ENCODE measurements at regions of chr1 and their contacts with region 1.

Region 1: GRCh38 chr1:66436378-66437145 is 97.4 kb upstream of the SGIP1 start:
- DNase-seq: peak; percentile 42 to 56 (median 48)
- H3K4me3 ChIP-seq: no peak overlapping the region
- H3K4me3 Mint-ChIP-seq: peak overlapping the region in 4 of 8 donors; percentile 4 to 61 (median 31)
- H3K27ac ChIP-seq: no peak overlapping the region
- H3K27ac Mint-ChIP-seq: peak overlapping the region in 6 of 7 donors; percentile 0 to 92 (median 52)
- H3K4me1 ChIP-seq: peaks cover 21% of the 10 kb centered on the region
- H3K4me1 Mint-ChIP-seq: peaks cover 8 to 27% (median 19%) of the 10 kb centered on the region in 4 donors
- H3K27me3 ChIP-seq: no peaks in the 10 kb centered on the region
- H3K27me3 Mint-ChIP-seq: no peaks in the 10 kb centered on the region

Region 2: DNA sequence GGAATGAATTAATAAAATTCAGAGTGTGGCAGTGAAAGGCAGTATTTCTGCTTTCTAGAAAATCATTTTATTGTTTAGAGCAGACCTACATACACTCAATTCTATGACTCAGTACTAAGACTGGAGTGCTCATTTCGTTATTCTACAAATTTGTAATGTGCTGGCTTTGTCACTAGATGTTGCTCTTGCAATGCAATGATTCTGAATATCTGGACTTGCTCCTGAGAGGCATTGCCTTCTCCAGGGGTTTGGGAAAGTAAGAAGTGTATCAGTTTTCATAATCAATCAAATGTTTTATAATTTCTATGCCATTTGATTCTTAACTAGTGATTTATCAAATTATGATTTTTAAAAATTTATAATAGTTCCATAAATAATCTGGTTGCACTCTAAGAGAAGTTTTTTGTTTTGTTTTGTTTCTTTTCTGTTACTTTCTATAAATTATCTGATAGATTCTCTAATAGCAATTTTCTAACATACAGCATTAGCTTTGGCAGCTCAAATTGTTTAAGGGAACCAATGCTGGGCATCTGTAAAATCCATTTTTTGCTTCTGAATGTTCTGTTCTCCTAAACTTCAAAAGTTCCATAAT is 183.1 kb before region 1 on chr1:
- CTCF ChIA-PET with region 1: interaction called, 108 read pairs
- POLR2A ChIA-PET with region 1: interaction called, 4 read pairs
- intact Hi-C with region 1: loop called (anchors 2 kb)
- DNase-seq: peak in 4 of 5 donors; percentile 45 to 55 (median 50)
- H3K4me3 ChIP-seq: no peak overlapping the region
- H3K4me3 Mint-ChIP-seq: no peak overlapping the region
- H3K27ac ChIP-seq: no peak overlapping the region
- H3K27ac Mint-ChIP-seq: peak overlapping the region in 1 of 7 donors; percentile 57
- H3K4me1 ChIP-seq: peaks cover 26% of the 10 kb centered on the region
- H3K4me1 Mint-ChIP-seq: peaks cover 5 to 24% (median 16%) of the 10 kb centered on the region in 4 donors
- H3K27me3 ChIP-seq: no peaks in the 10 kb centered on the region
- H3K27me3 Mint-ChIP-seq: peaks cover 0 to 2% of the 10 kb centered on the region in 2 donors

Region 3: DNA sequence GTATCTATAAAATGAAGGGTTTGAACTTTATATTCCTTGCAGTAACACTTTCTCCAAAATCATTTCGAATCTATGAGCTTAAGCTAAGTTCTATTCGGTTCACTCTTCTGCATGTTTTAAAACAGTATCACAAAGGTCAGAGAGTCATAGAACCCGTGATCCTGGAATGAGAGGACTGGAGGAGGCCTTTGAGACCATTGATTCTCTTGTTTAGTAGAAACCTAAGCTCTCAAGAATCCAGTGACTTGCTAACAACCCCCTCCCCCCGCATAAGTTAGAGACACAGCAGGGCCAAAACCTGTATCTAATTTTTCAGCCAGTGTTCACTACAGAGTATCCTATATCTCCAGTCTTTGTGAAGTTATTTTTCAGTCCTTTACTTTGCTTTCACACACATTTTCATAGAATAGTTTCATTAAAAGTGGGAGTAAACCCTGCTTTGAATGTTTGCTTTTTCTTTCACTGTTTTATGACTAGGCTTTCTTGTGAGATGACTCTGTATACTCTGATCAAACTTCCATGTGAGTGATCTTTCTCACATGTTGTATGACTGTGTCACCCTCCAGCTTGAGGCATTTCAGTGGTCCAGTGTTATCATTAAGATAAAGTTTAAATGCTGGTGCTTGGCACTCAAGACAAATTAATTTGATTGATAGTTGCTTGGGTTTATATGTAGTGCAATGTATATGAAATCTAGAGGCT is 178.0 kb before region 1 on chr1:
- CTCF ChIA-PET with region 1: interaction called, 108 read pairs
- POLR2A ChIA-PET with region 1: interaction called, 4 read pairs
- intact Hi-C with region 1: loop called (anchors 2 kb)
- DNase-seq: no peak
- H3K4me3 ChIP-seq: no peak overlapping the region
- H3K4me3 Mint-ChIP-seq: no peak overlapping the region
- H3K27ac ChIP-seq: no peak overlapping the region
- H3K27ac Mint-ChIP-seq: no peak overlapping the region
- H3K4me1 ChIP-seq: peaks cover 14% of the 10 kb centered on the region
- H3K4me1 Mint-ChIP-seq: peaks cover 19 to 50% (median 30%) of the 10 kb centered on the region in 4 donors
- H3K27me3 ChIP-seq: no peaks in the 10 kb centered on the region
- H3K27me3 Mint-ChIP-seq: no peaks in the 10 kb centered on the region

Region 4: GRCh38 chr1:66265796-66266195 is 170.8 kb before region 1 on chr1:
- CTCF ChIA-PET with region 1: interaction called, 10 read pairs
- POLR2A ChIA-PET with region 1: interaction called, 3 read pairs
- intact Hi-C with region 1: no loop called
- DNase-seq: no peak
- H3K4me3 ChIP-seq: no peak overlapping the region
- H3K4me3 Mint-ChIP-seq: no peak overlapping the region
- H3K27ac ChIP-seq: no peak overlapping the region
- H3K27ac Mint-ChIP-seq: peak overlapping the region in 4 of 7 donors; percentile 34 to 68 (median 43)
- H3K4me1 ChIP-seq: peaks cover 22% of the 10 kb centered on the region
- H3K4me1 Mint-ChIP-seq: peaks cover 19 to 43% (median 28%) of the 10 kb centered on the region in 4 donors
- H3K27me3 ChIP-seq: no peaks in the 10 kb centered on the region
- H3K27me3 Mint-ChIP-seq: no peaks in the 10 kb centered on the region

Region 5: DNA sequence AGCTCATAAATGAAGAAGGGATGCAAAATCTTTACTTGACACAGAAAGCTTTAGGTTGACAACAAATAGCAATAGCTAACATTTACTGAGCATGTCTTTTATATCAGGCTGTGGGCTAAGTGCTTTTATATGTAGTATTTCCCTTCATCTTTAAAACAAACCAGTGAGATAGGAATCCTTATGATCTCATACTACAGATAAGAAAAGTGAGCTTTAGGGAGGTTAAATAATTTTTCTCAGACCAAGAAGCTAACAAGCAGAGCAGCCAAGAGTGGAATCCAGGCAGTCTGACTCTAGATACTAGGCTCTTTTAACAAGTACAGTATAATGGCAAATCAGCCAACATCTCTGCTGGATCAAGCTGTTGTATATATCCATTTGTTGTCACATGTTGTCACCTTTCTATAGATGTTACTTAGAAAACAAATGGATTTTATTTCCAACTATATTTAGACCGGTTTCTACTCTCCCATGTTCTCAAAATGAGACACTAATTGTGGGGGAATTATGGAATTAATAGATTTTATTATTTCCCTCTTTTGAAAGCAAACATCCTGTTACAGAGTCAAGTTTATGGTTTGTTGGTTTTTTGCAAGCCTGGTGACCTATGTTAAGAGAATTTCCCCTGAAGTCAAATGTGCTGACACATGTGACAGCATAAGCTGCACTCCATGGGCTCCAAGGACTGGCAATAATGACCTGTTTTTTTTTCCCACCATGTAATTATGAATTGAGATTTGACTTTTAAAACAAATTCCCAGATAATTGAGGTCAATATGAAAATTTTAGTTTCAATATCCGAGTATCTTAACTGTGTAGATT is 145.3 kb before region 1 on chr1:
- CTCF ChIA-PET with region 1: interaction called, 11 read pairs
- POLR2A ChIA-PET with region 1: no interaction called
- intact Hi-C with region 1: no loop called
- DNase-seq: no peak
- H3K4me3 ChIP-seq: no peak overlapping the region
- H3K4me3 Mint-ChIP-seq: no peak overlapping the region
- H3K27ac ChIP-seq: no peak overlapping the region
- H3K27ac Mint-ChIP-seq: peak overlapping the region in 2 of 7 donors; percentile 24 to 45
- H3K4me1 ChIP-seq: peaks cover 13% of the 10 kb centered on the region
- H3K4me1 Mint-ChIP-seq: peaks cover 25 to 40% (median 30%) of the 10 kb centered on the region in 4 donors
- H3K27me3 ChIP-seq: no peaks in the 10 kb centered on the region
- H3K27me3 Mint-ChIP-seq: no peaks in the 10 kb centered on the region

Region 6: GRCh38 chr1:66374561-66375111 is 61.9 kb before region 1 on chr1:
- CTCF ChIA-PET with region 1: interaction called, 12 read pairs
- POLR2A ChIA-PET with region 1: no interaction called
- intact Hi-C with region 1: loop called (anchors 5 kb)
- DNase-seq: peak; percentile 51 to 66 (median 54)
- H3K4me3 ChIP-seq: no peak overlapping the region
- H3K4me3 Mint-ChIP-seq: peak overlapping the region; percentile 47 to 86 (median 68)
- H3K27ac ChIP-seq: peak overlapping the region; percentile 58
- H3K27ac Mint-ChIP-seq: peak overlapping the region; percentile 81 to 99 (median 93)
- H3K4me1 ChIP-seq: peaks cover 69% of the 10 kb centered on the region
- H3K4me1 Mint-ChIP-seq: peaks cover 58 to 72% (median 65%) of the 10 kb centered on the region in 4 donors
- H3K27me3 ChIP-seq: no peaks in the 10 kb centered on the region
- H3K27me3 Mint-ChIP-seq: no peaks in the 10 kb centered on the region

Region 7: DNA sequence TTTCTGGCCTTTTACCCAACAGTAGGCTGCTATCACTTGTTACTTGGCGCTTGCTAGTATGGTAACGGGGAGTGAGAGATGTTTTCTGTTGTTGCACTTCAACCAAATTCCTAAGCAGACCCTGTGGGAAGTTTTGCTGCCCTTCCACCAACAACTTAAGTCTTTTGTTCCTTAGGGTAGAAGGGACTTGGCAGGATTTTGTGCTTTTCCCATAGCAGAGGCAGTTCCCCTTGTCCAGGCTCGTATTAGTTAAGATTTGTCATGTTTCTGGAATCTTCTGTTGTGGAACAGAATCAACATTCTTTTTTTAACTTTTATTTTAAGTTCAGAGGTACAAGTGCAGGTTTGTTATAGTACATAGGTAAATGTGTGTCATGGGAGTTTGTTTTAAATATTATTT is 24.2 kb after region 1 on chr1:
- CTCF ChIA-PET with region 1: no interaction called
- POLR2A ChIA-PET with region 1: no interaction called
- intact Hi-C with region 1: no loop called
- DNase-seq: no peak
- H3K4me3 ChIP-seq: no peak overlapping the region
- H3K4me3 Mint-ChIP-seq: no peak overlapping the region
- H3K27ac ChIP-seq: no peak overlapping the region
- H3K27ac Mint-ChIP-seq: no peak overlapping the region
- H3K4me1 ChIP-seq: no peaks in the 10 kb centered on the region
- H3K4me1 Mint-ChIP-seq: no peaks in the 10 kb centered on the region
- H3K27me3 ChIP-seq: no peaks in the 10 kb centered on the region
- H3K27me3 Mint-ChIP-seq: peaks cover 14 to 16% of the 10 kb centered on the region in 2 donors